PC-9 (cell line): ENCODE measurements at regions of chr17 and their contacts with region 1.

Region 1: DNA sequence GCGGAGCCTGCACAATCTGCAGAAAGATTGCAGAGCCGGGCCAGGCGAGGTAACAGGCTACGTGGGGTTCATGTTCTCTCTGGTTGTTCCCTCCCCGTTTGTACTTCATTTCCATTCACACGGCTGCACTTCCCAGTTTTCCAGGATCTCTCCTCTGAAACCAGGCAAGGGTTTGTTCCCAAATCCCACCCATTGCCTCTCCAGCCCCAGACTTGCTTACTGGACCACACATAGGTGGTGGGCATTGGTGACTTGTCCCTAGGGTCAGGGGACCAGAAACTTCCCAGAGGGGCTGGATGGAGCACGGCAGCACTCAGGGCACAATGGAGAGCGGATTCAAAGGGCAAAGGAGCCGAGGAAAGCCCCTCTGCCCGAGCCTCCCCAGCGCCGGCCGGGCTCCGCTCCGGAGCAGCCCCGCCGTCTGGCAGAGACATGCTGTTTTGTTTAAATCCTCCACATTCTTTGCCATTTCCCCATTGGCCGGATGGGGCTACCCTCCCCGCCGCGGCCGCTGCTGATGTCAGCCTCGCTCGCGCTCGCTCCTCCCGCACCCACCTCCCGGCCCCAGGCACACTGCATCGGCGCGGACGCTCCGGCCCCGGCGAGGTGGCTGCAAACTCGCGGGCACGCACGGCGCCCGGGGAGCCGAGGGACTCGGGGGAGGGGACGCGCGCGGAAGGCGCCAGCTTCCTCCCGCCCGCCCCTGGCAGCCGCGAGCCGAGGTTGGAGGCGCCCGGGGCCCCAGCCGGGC is at the start of gene PITPNC1:
- DNase-seq: peak; percentile 65 to 77
- H3K4me3 ChIP-seq: peak within 1 kb of the TSS; percentile 77
- H3K27ac ChIP-seq: no peak within 1 kb of the TSS
- H3K4me1 ChIP-seq: peaks cover 33% of the 10 kb centered on the region
- H3K27me3 ChIP-seq: no peaks in the 10 kb centered on the region
- CTCF ChIP-seq: no peak; the same call in 1 of the 2 replicates
- total RNA-seq, gene PITPNC1: 6.0 and 7.1 TPM in 2 replicates

Region 2: GRCh38 chr17:66981983-66982508 is 394.9 kb before region 1 on chr17:
- CTCF ChIA-PET with region 1: no interaction called
- POLR2A ChIA-PET with region 1: no interaction called
- intact Hi-C with region 1: loop called (anchors 5 kb)
- DNase-seq: no peak
- H3K4me3 ChIP-seq: no peak overlapping the region
- H3K27ac ChIP-seq: no peak overlapping the region
- H3K4me1 ChIP-seq: no peaks in the 10 kb centered on the region
- H3K27me3 ChIP-seq: no peaks in the 10 kb centered on the region
- CTCF ChIP-seq: no peak

Region 3: GRCh38 chr17:67366193-67367157 is 10.4 kb before region 1 on chr17 and contains the start of gene PSMD12:
- CTCF ChIA-PET with region 1: interaction called, 26 read pairs
- POLR2A ChIA-PET with region 1: no interaction called
- intact Hi-C with region 1: no loop called
- DNase-seq: peak; percentile 71 to 94
- H3K4me3 ChIP-seq: peak within 1 kb of the TSS; percentile 89
- H3K27ac ChIP-seq: peak within 1 kb of the TSS; percentile 82
- H3K4me1 ChIP-seq: peaks cover 24% of the 10 kb centered on the region
- H3K27me3 ChIP-seq: no peaks in the 10 kb centered on the region
- CTCF ChIP-seq: no peak
- total RNA-seq, gene PSMD12: 46.8 and 80.5 TPM in 2 replicates

Region 4: GRCh38 chr17:67584991-67585602 is 208.2 kb after region 1 on chr17:
- CTCF ChIA-PET with region 1: no interaction called
- POLR2A ChIA-PET with region 1: no interaction called
- intact Hi-C with region 1: no loop called
- DNase-seq: peak; percentile 32 to 93
- H3K4me3 ChIP-seq: no peak overlapping the region
- H3K27ac ChIP-seq: peak overlapping the region; percentile 67
- H3K4me1 ChIP-seq: peaks cover 20% of the 10 kb centered on the region
- H3K27me3 ChIP-seq: no peaks in the 10 kb centered on the region
- CTCF ChIP-seq: no peak

Region 5: DNA sequence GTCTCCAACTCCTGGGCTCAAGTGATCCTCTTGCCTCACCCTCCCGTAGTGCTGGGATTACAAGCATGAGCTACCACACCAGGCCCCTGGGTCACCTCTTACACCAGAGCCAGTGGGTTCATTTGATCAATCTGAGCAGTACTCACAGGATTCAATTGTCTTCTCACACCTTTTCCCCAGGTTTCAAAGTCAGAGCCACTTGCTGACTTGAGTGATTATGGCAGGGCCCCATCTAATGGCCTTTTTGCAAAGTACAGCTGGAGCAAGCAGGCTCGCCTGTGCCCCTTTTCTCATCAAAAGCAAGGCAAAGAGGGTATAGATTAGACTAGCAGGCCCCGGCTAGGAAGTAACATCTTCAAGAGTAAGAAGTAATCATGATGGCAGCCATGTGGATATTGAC is 226.0 kb after region 1 on chr17:
- CTCF ChIA-PET with region 1: no interaction called
- POLR2A ChIA-PET with region 1: no interaction called
- intact Hi-C with region 1: loop called (anchors 2 kb)
- DNase-seq: peak in 1 of 2 experiments; percentile 41
- H3K4me3 ChIP-seq: no peak overlapping the region
- H3K27ac ChIP-seq: no peak overlapping the region
- H3K4me1 ChIP-seq: no peaks in the 10 kb centered on the region
- H3K27me3 ChIP-seq: no peaks in the 10 kb centered on the region
- CTCF ChIP-seq: peak; percentile 75

Region 6: DNA sequence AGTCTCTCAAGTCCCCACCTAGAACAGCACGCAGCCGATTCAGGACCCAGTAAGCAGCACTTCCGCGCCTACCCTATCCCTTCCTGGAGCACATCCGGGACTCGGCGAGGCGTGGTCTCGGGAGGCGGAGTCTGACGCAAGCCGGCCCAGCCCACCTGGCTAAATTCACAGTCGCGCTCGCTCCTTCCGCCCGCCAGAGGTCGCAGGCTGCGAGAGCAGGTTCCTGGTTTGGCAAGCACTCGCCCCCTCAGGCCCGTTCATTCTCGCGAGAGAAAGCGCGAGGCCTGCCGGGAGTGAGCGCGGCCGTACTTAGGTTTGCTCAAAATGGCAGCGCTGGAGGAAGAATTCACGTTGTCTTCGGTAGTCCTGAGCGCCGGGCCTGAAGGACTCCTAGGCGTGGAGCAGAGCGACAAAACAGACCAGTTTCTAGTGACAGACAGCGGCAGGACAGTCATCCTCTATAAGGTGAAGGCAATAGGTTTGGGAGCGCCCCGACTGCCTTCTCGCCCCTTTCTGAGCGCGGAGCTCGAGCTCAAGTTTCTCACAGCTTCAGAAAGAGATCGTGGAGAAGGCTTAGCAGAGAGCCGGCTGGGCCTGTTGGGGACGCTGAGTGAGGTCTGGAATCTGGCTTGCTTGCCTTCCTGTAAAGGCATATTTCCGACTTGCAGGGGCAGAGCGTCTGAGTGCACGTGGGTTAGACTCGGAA is 340.9 kb after region 1 on chr17 and contains the start of gene NOL11:
- CTCF ChIA-PET with region 1: no interaction called
- POLR2A ChIA-PET with region 1: no interaction called
- intact Hi-C with region 1: loop called (anchors 5 kb)
- DNase-seq: peak; percentile 92 to 98
- H3K4me3 ChIP-seq: peak within 1 kb of the TSS; percentile 89
- H3K27ac ChIP-seq: peak within 1 kb of the TSS; percentile 74
- H3K4me1 ChIP-seq: peaks cover 10% of the 10 kb centered on the region
- H3K27me3 ChIP-seq: no peaks in the 10 kb centered on the region
- CTCF ChIP-seq: peak; percentile 85
- total RNA-seq, gene NOL11: 22.3 and 38.2 TPM in 2 replicates